WTC11 (cell line): ENCODE measurements at regions of chr2 and their contacts with region 1.

Region 1: GRCh38 chr2:120693121-120693520 is 42.5 kb upstream of the GLI2 start:
- DNase-seq: no peak
- ATAC-seq: no peak
- H3K4me3 Mint-ChIP-seq: no peak overlapping the region
- H3K27ac Mint-ChIP-seq: no peak overlapping the region
- H3K4me1 Mint-ChIP-seq: peaks cover 20% of the 10 kb centered on the region
- H3K27me3 Mint-ChIP-seq: peaks cover 61% of the 10 kb centered on the region
- CTCF ChIP-seq: no peak

Region 2: DNA sequence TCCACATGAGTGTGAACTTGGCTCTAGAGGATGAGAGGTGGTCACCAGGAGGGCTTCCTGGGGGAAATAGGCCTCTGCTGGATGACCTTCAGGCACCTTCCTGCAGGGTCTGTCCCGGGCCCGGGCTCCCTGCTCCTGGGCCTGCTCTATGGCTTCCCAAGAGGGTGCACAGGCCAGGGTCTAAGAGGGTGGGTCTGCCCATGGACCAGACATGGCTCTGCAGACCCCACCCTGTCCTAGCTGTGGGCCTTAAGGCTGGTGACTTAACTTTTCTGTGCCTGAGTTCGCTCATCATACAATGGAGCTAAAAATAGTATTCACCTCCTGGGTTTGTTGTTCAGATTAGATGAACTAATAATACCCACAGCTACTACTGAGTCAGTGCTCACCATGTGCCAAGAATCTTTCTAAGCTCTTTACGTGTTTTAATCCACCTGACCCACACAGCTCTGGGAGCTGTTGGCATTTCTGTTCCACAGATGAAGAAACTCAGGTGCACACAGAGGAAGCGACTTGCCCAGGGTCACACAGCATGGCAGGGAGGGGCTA is 332.7 kb before region 1 on chr2:
- CTCF ChIA-PET with region 1: no interaction called
- POLR2A ChIA-PET with region 1: no interaction called
- DNase-seq: no peak
- ATAC-seq: no peak
- H3K4me3 Mint-ChIP-seq: no peak overlapping the region
- H3K27ac Mint-ChIP-seq: no peak overlapping the region
- H3K4me1 Mint-ChIP-seq: peaks cover 19% of the 10 kb centered on the region
- H3K27me3 Mint-ChIP-seq: peaks cover 4% of the 10 kb centered on the region
- CTCF ChIP-seq: no peak

Region 3: GRCh38 chr2:120436885-120437603 is 256.1 kb before region 1 on chr2:
- CTCF ChIA-PET with region 1: no interaction called
- POLR2A ChIA-PET with region 1: no interaction called
- DNase-seq: peak; percentile 84
- ATAC-seq: peak; percentile 78
- H3K4me3 Mint-ChIP-seq: no peak overlapping the region
- H3K27ac Mint-ChIP-seq: no peak overlapping the region
- H3K4me1 Mint-ChIP-seq: peaks cover 30% of the 10 kb centered on the region
- H3K27me3 Mint-ChIP-seq: peaks cover 77% of the 10 kb centered on the region
- CTCF ChIP-seq: peak; percentile 33; the same call in 1 of the 2 replicates

Region 4: GRCh38 chr2:120559401-120559800 is 133.7 kb before region 1 on chr2:
- CTCF ChIA-PET with region 1: no interaction called
- POLR2A ChIA-PET with region 1: no interaction called
- DNase-seq: no peak
- ATAC-seq: no peak
- H3K4me3 Mint-ChIP-seq: no peak overlapping the region
- H3K27ac Mint-ChIP-seq: no peak overlapping the region
- H3K4me1 Mint-ChIP-seq: peaks cover 4% of the 10 kb centered on the region
- H3K27me3 Mint-ChIP-seq: peaks cover 20% of the 10 kb centered on the region
- CTCF ChIP-seq: no peak

Region 5: DNA sequence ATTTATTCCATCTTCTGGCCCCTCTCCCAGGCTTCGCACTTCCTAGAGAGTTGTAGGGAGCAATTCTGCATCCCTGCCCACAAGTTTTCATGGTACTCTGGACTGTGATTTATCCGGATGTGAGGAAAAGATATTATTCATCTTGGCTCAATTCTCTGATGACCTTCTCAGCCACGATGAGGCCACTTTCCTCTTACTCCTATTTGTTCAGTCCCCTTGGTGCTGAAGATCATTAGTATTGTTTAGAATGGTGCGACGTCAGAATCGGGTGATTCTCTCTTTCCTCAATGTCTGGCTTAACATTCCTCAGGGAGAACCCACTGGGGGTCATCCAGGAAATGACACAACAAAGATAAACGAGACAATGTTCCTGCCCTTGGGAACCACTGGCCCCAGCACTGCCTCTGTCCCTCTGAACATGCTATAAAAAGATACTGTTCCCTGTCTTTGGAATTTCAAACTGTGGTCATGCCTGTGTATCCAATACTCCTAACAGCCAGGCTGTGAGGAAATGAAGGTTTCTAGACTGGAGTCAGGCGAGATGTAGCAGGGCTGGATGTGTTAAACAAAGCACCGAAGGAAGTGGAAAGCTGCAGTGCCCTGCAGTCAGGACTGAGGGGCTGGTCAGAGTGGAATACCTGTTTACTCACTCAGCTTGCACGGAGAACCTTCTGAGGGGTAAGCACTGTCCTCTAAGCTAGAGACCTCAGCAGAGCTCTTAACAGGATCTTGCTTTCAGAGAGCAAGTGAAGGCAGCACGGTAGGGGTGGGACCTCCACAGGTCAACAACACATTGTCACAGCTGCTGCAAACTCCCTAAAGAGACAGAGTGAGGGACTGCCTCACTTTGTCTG is 29.7 kb after region 1 on chr2:
- CTCF ChIA-PET with region 1: no interaction called
- POLR2A ChIA-PET with region 1: no interaction called
- DNase-seq: no peak
- ATAC-seq: peak; percentile 91
- H3K4me3 Mint-ChIP-seq: no peak overlapping the region
- H3K27ac Mint-ChIP-seq: no peak overlapping the region
- H3K4me1 Mint-ChIP-seq: peaks cover 15% of the 10 kb centered on the region
- H3K27me3 Mint-ChIP-seq: peaks cover 67% of the 10 kb centered on the region
- CTCF ChIP-seq: no peak

Region 6: DNA sequence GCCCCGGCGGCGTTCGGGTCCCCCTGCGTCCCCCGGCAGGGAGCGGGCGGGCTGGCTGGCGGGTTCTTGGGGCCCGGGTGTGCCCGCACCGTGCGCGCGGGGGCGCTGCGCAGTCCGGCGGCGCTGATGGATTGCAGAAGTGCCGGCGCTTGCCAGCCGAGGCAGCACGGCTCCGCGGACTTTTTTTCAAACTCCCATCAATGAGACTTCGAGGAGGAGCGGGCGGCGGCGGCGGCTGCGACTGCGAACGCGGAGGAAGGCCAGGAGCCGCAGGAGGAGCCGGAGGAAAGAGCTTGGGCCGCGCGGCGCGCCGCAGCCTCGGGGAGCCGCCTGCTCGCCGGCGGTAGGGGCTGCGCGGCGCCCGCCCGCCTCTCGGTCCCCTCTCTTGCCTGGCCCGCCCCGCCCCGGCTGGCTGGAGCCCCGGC is 42.6 kb after region 1 on chr2 and contains the start of gene GLI2:
- CTCF ChIA-PET with region 1: interaction called, 36 read pairs
- POLR2A ChIA-PET with region 1: no interaction called
- DNase-seq: peak; percentile 87
- ATAC-seq: peak; percentile 52
- H3K4me3 Mint-ChIP-seq: peak within 1 kb of the TSS; percentile 88
- H3K27ac Mint-ChIP-seq: no peak within 1 kb of the TSS
- H3K4me1 Mint-ChIP-seq: peaks cover 43% of the 10 kb centered on the region
- H3K27me3 Mint-ChIP-seq: no peaks in the 10 kb centered on the region
- CTCF ChIP-seq: peak; percentile 50; the same call in 1 of the 2 replicates
- total RNA-seq, gene GLI2: 45.9 to 60.9 TPM (median 48.6 TPM) in 3 replicates

Region 7: GRCh38 chr2:120787111-120787821 is 94.1 kb after region 1 on chr2:
- CTCF ChIA-PET with region 1: interaction called, 11 read pairs
- POLR2A ChIA-PET with region 1: interaction called, 3 read pairs
- DNase-seq: no peak
- ATAC-seq: no peak
- H3K4me3 Mint-ChIP-seq: peak overlapping the region; percentile 50
- H3K27ac Mint-ChIP-seq: peak overlapping the region; percentile 89
- H3K4me1 Mint-ChIP-seq: peaks cover 98% of the 10 kb centered on the region
- H3K27me3 Mint-ChIP-seq: no peaks in the 10 kb centered on the region
- CTCF ChIP-seq: no peak

Region 8: GRCh38 chr2:120861576-120862191 is 168.6 kb after region 1 on chr2:
- CTCF ChIA-PET with region 1: interaction called, 23 read pairs
- POLR2A ChIA-PET with region 1: no interaction called
- DNase-seq: no peak
- ATAC-seq: no peak
- H3K4me3 Mint-ChIP-seq: no peak overlapping the region
- H3K27ac Mint-ChIP-seq: peak overlapping the region; percentile 33; the same call in 1 of the 2 replicates
- H3K4me1 Mint-ChIP-seq: peaks cover 71% of the 10 kb centered on the region
- H3K27me3 Mint-ChIP-seq: no peaks in the 10 kb centered on the region
- CTCF ChIP-seq: no peak

Region 9: DNA sequence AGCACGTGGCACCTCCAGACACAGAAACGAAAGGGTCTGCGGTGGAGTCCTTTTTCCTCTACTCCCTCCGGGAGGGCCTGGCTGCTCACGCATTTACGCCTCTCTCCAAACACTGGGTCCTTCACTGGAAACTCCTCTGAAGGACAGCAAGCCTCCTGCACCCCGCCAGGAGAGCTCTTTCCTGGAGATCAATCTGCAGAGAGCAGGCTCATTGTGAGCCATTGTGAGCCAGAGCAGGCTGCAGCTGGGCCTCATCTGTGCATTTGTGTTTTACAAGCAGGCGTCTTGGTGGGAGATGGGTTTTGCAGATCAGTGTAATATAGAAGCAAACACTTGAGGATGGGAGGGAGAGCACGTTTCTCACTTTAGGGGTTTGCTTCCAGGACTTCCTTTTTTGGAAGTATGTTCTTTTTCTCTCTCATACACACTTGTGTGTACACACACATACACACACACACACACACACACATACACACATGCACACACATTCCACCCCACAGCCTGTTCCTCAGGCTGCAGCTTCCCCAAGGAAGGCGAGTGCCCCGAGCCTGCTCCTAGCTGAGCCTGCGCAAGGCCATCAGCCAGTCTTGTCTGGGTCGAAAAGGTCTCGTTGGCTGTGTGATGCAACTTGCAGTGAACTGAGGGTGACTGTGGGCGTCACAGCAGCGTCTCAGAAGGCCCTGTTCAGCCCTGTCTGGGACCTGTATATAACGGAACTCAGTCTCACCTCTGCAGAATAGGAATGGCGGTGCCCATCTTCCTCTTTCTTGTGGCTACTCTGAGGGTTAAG is 206.0 kb after region 1 on chr2:
- CTCF ChIA-PET with region 1: interaction called, 14 read pairs
- POLR2A ChIA-PET with region 1: no interaction called
- DNase-seq: no peak
- ATAC-seq: peak; percentile 73
- H3K4me3 Mint-ChIP-seq: no peak overlapping the region
- H3K27ac Mint-ChIP-seq: peak overlapping the region; percentile 95
- H3K4me1 Mint-ChIP-seq: peaks cover 84% of the 10 kb centered on the region
- H3K27me3 Mint-ChIP-seq: no peaks in the 10 kb centered on the region
- CTCF ChIP-seq: no peak

Region 10: DNA sequence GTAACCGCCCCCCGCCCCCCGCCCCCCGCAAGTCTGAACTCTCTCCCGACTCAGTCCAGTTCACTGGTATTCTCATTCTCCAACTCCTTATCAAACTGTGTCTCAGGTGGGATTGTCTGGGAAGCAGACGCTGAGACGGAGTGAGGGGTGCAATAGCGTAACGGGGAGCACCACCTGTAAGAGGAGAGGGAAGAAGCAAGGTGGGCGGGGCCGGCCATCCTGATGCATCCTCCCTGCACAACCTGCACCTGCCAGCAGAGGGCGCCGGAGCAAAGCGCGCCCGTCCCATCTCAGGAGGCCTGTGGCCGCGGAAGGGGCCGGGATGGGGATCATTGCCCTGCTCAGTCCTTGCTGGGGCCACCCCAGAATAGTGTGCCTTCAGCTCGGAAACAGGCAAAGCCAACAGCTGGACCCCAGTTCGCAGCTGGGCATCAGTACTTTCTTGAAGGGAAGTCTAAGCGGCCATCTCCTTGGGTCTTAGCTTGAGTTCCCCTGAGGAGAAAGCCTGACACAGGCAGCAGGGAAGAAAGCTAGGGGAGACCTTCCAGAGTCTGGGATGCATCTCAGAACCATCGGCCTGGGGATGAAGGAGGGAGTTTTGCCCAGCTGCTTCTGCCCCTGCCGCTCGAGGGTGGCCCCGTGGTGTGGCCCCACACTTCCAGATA is 383.9 kb after region 1 on chr2:
- CTCF ChIA-PET with region 1: interaction called, 55 read pairs
- POLR2A ChIA-PET with region 1: interaction called, 12 read pairs
- DNase-seq: peak; percentile 93
- ATAC-seq: peak; percentile 33
- H3K4me3 Mint-ChIP-seq: peak overlapping the region; percentile 72
- H3K27ac Mint-ChIP-seq: no peak overlapping the region
- H3K4me1 Mint-ChIP-seq: peaks cover 16% of the 10 kb centered on the region
- H3K27me3 Mint-ChIP-seq: peaks cover 48% of the 10 kb centered on the region
- CTCF ChIP-seq: peak; percentile 96